ENCODE measurements at regions of chr3 and their contacts with region 1.

Region 1: DNA sequence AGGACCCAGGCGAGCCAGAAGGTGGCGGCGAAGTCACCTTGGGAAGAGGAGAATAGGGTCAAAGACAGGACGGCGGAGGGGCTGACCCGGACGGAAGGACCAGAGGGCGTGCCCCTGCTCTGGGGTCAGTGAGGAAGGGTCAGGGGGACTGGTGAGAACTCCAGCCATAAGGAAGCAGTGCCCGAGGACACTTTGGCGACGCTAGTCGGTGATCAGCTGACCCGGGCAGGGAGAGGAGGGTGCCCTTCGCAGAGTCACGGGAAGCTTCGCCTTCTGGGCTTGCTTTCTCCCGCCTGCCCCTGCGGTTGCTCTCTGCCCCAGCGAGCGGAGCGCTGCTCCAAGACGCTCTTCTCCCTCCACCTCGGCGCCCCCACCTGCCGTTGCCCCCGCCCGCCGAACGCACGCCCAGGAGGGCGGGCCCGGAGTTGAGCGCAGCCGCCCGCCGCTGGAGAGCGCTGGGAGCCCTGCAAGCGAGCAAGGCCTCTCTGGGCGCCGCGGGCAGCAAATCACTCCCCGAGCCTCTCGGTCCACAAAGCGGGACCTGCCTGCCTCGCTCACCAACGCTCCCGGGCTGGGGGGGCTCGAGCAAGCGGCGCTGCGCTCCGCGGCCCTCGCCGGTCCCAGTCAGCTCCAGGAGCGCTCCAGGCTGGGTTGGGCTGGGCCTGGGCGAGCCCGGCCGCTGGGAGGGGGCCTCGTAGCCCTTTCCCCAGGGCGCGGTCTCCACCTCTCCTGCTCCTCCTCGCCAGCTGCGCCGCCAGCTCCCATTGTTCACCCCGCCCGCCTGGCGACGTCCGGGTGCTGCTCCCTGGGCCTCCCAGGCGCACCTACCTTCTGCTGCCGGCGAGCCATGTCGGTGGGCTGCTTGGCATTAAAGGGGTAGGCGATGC is 1.2 kb downstream of the CADPS start:
- DNase-seq: peak; percentile 42
- ATAC-seq: peak; percentile 73 to 88

Region 2: DNA sequence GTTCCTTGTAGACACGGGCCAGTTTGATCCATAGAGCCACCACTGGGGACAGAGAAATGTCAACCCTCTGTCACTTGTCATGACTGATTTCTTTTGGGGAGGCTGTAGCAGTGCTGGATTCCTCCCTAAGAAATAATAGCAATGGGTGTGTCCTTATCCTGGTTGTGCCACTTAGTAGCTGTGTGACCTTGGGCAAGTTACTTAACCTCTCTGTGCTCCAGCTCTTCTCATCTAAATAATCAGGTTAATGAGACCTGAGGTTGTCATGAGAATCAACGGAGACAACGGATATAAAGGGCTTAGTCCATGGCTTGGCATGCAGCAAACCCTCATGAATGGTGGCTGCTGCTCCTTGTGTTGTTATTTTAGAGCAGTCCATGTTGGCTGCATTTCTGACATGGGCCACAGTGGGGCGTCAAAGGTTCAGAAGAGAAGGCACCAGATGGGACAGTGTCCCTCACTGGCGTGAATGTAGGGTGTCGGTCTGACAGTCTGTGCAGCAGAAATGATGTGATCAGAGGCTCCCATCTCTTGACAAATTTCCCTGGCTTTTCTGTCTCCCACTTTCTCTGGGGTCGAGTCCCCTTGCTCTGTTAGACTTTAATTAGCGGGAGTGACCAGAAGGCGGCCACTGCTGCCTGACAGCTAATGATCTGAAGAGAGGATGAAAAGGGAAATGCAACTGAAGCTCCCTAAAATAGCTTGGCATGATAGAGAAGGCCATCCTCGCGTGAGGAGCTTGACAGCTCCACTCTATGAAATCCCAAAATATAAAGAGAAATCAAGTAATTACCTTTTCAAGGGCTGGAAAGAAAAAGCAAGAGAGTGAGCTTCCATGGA is 208.2 kb before region 1 on chr3:
- intact Hi-C with region 1: loop called in 1 of 2 experiments (anchors 5 kb)
- DNase-seq: peak; percentile 66
- ATAC-seq: peak; percentile 84 to 87

Region 3: DNA sequence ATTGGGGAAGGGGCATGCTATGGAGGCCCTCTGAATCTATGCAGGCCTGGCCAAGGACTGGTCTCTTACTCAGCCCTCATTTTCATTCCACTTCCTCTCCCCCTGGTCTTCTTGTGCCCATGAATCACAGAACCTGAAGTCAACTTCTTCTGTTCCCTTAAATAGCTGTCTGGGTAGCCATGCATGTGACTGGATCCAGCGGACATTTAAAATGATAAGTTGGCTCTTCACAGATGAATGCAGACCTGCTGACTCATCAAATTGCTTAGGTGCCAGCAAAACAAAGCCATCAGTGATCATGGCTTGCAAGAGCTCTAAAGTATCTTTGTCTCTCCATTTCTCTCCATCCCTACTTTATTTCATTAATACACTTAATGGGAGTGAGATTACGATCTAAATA is 91.3 kb after region 1 on chr3:
- intact Hi-C with region 1: no loop called
- DNase-seq: no peak
- ATAC-seq: peak in 1 of 2 donors; percentile 72

Region 4: DNA sequence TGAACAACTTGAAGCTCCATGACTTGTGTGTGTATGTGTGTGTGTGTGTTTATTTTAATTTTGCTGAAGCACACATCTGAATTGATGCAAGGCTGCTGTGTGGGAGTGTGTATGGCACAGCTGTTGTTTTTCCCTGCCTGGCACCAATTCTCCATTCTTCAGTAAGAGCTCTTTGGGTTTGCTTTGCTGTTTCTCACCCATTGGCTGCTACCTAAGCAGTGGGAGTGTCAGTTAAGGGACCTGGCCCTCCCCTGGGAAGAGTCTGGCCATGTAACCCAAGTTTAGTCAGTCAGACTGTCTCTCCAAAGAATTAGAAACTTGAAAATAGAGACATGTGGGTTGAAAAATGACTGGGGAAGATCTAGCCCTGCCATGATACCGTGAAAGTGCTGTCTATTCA is 277.9 kb after region 1 on chr3:
- intact Hi-C with region 1: loop called in 1 of 2 experiments (anchors 10 kb)
- DNase-seq: no peak
- ATAC-seq: no peak

Region 5: DNA sequence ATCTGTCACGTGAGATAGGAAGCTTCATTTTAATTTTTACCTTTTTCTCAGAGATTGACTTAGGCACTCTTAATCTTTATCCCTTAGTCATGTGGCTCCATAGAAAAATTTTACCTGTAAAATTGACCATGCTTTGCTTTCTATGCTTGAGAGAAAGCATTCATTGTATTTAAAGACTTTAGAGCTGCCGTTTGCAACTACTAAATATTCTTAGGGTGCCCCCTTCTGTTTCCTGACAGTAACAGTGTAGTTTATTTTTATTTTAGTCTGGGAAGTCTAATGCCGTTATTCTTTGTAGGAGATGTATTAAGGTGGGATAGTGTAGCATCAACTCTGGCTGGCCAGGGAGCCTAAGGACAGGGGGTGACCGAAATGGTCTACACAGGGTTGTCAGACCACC is 319.6 kb after region 1 on chr3:
- intact Hi-C with region 1: loop called in 1 of 2 experiments (anchors 10 kb)
- DNase-seq: no peak
- ATAC-seq: no peak

Region 6: GRCh38 chr3:63228087-63229023 is 354.4 kb after region 1 on chr3:
- intact Hi-C with region 1: loop called in 1 of 2 experiments (anchors 10 kb)
- DNase-seq: no peak
- ATAC-seq: peak; percentile 55 to 63

Region 7: DNA sequence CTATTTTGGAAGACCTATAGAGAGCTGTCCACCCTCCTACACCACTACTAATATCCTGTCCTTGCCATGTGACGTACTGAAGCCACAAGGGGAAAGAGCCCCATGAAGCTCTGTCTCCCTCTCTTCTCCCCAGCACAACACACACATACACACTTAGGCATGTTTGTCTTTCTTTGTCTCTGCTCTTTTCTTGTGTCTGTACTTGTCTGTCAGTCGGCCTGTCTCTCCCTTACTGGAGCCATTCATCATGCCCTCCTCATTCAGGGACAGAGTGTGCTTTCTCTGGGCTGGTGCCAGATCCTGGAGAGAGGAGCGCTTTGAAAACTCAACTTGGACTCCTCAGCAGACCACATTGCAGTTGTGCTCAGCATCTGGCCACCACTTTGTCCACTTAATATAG is 1101.7 kb after region 1 on chr3:
- intact Hi-C with region 1: no loop called
- DNase-seq: peak; percentile 69
- ATAC-seq: peak; percentile 64 to 66